AG04450 (cell line): ENCODE measurements at regions of chr7 and their contacts with region 1.

Region 1: GRCh38 chr7:41940760-41941343 is 238.0 kb upstream of the INHBA start:
- DNase-seq: no peak
- H3K4me3 ChIP-seq: no peak overlapping the region
- H3K27ac ChIP-seq: no peak overlapping the region
- H3K27me3 ChIP-seq: no peaks in the 10 kb centered on the region
- CTCF ChIP-seq: peak; percentile 95

Region 2: GRCh38 chr7:41630741-41631140 is 310.1 kb before region 1 on chr7:
- CTCF ChIA-PET with region 1: no interaction called
- POLR2A ChIA-PET with region 1: no interaction called
- DNase-seq: no peak
- H3K4me3 ChIP-seq: no peak overlapping the region
- H3K27ac ChIP-seq: no peak overlapping the region
- H3K27me3 ChIP-seq: no peaks in the 10 kb centered on the region
- CTCF ChIP-seq: no peak

Region 3: DNA sequence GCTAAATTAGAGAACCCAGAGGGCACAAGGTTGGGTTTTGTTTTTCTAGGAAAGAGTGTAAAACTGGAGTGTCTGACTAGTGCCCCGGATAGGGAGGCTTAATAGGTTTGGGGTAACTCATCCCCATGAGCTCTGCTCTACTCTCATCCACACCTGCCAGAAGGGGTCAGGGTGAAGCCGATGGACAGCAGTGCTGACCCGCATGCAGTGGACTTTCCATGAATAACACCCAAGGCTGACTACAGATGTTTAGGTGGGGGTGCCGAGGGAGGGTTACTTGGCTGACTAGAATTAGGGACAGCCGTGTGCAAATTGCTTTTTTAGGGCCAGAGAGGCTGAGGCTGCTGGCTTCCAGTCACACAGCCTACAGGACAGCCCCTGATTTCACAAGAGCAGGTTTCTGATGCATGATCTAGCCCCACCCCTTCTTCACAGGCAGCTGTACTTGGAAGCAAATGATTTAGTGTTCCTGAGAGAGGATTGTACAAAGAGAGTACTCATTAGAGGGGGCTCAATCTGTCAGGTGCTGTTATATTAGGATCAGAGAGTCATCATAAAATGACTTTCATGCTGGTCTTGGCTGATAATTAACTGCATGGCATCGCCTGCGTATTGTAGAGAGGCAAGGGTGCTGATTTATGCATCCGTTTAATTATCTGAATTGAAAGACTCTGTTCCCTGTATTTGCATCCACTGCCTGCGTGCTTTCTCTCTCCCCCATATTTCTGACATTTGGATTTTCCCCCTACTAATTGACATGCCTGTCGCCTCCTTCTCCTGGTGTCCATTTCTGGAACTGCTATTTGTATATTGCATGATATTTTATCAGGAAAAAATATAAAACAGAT is 247.5 kb before region 1 on chr7:
- CTCF ChIA-PET with region 1: no interaction called
- POLR2A ChIA-PET with region 1: no interaction called
- DNase-seq: no peak
- H3K4me3 ChIP-seq: no peak overlapping the region
- H3K27ac ChIP-seq: no peak overlapping the region
- H3K27me3 ChIP-seq: no peaks in the 10 kb centered on the region
- CTCF ChIP-seq: peak; percentile 63

Region 4: GRCh38 chr7:41742401-41743020 is 198.3 kb before region 1 on chr7:
- CTCF ChIA-PET with region 1: no interaction called
- POLR2A ChIA-PET with region 1: no interaction called
- DNase-seq: no peak
- H3K4me3 ChIP-seq: no peak overlapping the region
- H3K27ac ChIP-seq: no peak overlapping the region
- H3K27me3 ChIP-seq: no peaks in the 10 kb centered on the region
- CTCF ChIP-seq: no peak

Region 5: DNA sequence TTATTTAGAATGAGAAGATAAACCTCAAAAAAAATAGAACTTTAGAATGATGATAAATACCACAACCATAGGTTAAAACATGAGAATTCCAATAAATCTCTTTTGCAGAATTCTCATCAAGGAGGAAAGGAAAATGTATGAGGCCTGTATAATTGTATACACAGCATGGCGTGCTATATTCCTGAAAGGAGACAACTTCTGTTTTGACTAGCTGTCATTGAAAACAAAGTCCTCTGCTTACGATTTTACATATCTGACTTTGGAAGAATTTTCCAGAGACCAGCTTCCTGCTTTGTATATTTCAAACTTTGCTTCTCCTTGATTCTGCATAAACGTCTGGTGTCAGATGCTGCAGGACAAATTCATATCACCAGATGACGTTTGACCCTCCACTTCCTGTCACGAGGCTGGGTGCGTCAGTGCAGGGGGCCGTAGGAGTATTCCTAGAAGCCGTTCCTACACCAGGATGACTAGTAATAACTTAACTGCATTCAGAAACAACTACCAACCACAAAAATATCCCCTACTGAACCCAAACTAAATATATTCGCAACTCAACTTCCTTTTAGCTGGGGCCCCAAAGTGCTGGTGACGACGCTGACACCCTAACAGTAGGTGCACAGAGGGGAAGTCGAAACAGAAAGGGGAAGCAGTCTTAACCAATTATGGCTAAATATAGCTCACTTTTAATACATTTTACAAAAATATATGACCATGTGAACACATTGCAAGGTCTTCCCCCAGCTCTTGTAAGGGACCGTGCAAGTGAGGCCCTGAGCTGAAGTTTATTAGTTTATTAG is 59.3 kb before region 1 on chr7:
- CTCF ChIA-PET with region 1: interaction called, 12 read pairs
- POLR2A ChIA-PET with region 1: no interaction called
- DNase-seq: no peak
- H3K4me3 ChIP-seq: no peak overlapping the region
- H3K27ac ChIP-seq: peak overlapping the region; percentile 62
- H3K27me3 ChIP-seq: no peaks in the 10 kb centered on the region
- CTCF ChIP-seq: no peak

Region 6: GRCh38 chr7:41930538-41931262 is 10.2 kb before region 1 on chr7:
- CTCF ChIA-PET with region 1: interaction called, 63 read pairs
- POLR2A ChIA-PET with region 1: no interaction called
- DNase-seq: no peak
- H3K4me3 ChIP-seq: no peak overlapping the region
- H3K27ac ChIP-seq: no peak overlapping the region
- H3K27me3 ChIP-seq: no peaks in the 10 kb centered on the region
- CTCF ChIP-seq: no peak

Region 7: DNA sequence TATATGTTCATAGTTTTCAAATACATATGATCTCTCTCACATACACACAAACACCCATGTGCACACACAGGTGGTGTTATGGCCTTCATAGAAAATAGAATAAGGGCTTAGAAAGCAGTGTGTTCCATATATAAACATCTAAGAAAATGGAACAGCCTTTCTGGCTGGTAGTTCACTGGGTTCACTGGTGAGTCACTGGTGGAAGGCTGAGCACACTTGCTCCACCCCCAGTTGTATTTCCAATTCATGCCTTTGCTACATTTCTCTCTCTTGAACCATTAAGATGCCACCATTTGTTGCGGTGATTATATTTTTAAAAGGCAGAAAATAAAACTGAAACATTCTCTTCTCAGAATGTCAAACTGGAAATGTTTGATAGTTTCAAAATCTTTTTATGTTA is 44.0 kb after region 1 on chr7:
- CTCF ChIA-PET with region 1: interaction called, 118 read pairs
- POLR2A ChIA-PET with region 1: no interaction called
- DNase-seq: no peak
- H3K4me3 ChIP-seq: no peak overlapping the region
- H3K27ac ChIP-seq: no peak overlapping the region
- H3K27me3 ChIP-seq: no peaks in the 10 kb centered on the region
- CTCF ChIP-seq: no peak

Region 8: GRCh38 chr7:42198974-42199668 is 258.3 kb after region 1 on chr7:
- CTCF ChIA-PET with region 1: no interaction called
- POLR2A ChIA-PET with region 1: no interaction called
- DNase-seq: no peak
- H3K4me3 ChIP-seq: no peak overlapping the region
- H3K27ac ChIP-seq: no peak overlapping the region
- H3K27me3 ChIP-seq: no peaks in the 10 kb centered on the region
- CTCF ChIP-seq: no peak

Region 9: GRCh38 chr7:42690794-42691639 is 750.2 kb after region 1 on chr7:
- CTCF ChIA-PET with region 1: interaction called, 12 read pairs
- POLR2A ChIA-PET with region 1: no interaction called
- DNase-seq: no peak
- H3K4me3 ChIP-seq: no peak overlapping the region
- H3K27ac ChIP-seq: no peak overlapping the region
- H3K27me3 ChIP-seq: peaks cover 2% of the 10 kb centered on the region
- CTCF ChIP-seq: peak; percentile 60

Region 10: GRCh38 chr7:42876182-42877068 is 935.6 kb after region 1 on chr7:
- CTCF ChIA-PET with region 1: interaction called, 88 read pairs
- POLR2A ChIA-PET with region 1: no interaction called
- DNase-seq: peak; percentile 10
- H3K4me3 ChIP-seq: no peak overlapping the region
- H3K27ac ChIP-seq: no peak overlapping the region
- H3K27me3 ChIP-seq: peaks cover 10% of the 10 kb centered on the region
- CTCF ChIP-seq: peak; percentile 81